Pancreas (tissue), 10 donors: ENCODE measurements at regions of chr9 and their contacts with region 1.

Region 1: GRCh38 chr9:34252670-34253459 is 74.0 kb downstream of the UBAP1 start:
- DNase-seq: peak in 4 of 6 donors; percentile 33 to 78 (median 62)
- ATAC-seq: peak; percentile 61 to 90 (median 66)
- H3K4me3 ChIP-seq: no peak overlapping the region
- H3K27ac ChIP-seq: peak overlapping the region in 1 of 4 donors; percentile 19
- H3K4me1 ChIP-seq: peaks cover 0 to 7% (median 0%) of the 10 kb centered on the region in 3 donors
- H3K27me3 ChIP-seq: no peaks in the 10 kb centered on the region
- CTCF ChIP-seq: peak; percentile 72 to 94 (median 85)

Region 2: GRCh38 chr9:34089311-34089710 is 163.6 kb before region 1 on chr9:
- intact Hi-C with region 1: no loop called
- DNase-seq: no peak
- ATAC-seq: no peak
- H3K4me3 ChIP-seq: no peak overlapping the region
- H3K27ac ChIP-seq: no peak overlapping the region
- H3K4me1 ChIP-seq: peaks cover 0 to 3% (median 0%) of the 10 kb centered on the region in 3 donors
- H3K27me3 ChIP-seq: no peaks in the 10 kb centered on the region
- CTCF ChIP-seq: no peak

Region 3: GRCh38 chr9:34126207-34127034 is 126.4 kb before region 1 on chr9 and contains the start of gene DCAF12:
- intact Hi-C with region 1: loop called in 1 of 3 experiments (anchors 10 kb)
- DNase-seq: peak; percentile 90 to 97 (median 92)
- ATAC-seq: peak; percentile 98 to 99 (median 99)
- H3K4me3 ChIP-seq: peak within 1 kb of the TSS; percentile 60 to 89 (median 74)
- H3K27ac ChIP-seq: peak within 1 kb of the TSS; percentile 71 to 94 (median 88)
- H3K4me1 ChIP-seq: peaks cover 13 to 30% (median 15%) of the 10 kb centered on the region in 3 donors
- H3K27me3 ChIP-seq: no peaks in the 10 kb centered on the region
- CTCF ChIP-seq: no peak
- total RNA-seq, gene DCAF12: 12.0 to 22.1 (median 15.0) TPM